GM12878 (cell line): ENCODE measurements at regions of chr2 and their contacts with region 1.

Region 1: DNA sequence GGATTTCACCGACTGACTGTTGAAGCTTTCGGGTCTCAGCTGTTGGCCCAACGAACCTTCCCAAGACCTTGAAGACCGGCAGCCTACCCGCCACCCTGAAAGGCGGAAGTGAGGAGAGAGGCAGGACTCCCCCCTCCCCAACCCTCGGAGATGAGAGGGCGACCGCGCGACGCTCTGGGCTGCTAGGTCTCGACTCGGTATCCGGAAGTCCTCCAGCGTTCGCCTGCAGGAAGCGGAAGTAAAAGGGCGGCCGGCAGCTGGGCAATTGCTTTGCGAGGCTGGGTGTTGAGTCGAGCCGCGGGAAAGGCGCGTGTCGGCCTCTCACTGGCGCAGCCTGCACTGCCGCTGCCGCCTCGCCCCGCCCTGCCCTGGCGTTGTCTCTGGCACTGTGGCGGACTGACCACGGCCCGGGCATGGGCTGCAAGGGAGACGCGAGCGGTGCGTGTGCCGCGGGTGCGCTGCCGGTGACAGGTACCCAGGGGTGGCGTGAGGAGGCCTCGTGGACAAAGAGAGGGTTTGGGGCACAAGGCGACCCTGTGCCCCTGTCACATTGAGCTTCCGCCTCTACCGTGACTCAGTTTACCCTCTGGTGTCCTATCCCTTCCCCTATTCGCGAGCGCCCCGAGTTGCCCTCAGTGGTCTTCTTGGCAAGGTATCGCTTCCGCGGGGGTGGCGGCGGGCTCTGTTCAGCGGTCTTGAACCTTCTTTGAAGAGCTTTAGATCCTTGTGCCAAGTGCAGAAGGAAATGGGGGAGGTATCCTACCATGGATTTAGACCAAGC is at the start of gene UGGT1:
- DNase-seq: peak; percentile 93
- ATAC-seq: peak; percentile 97
- H3K4me3 ChIP-seq: peak within 1 kb of the TSS; percentile 89
- H3K27ac ChIP-seq: peak within 1 kb of the TSS; percentile 89
- H3K4me1 ChIP-seq: peaks cover 11% of the 10 kb centered on the region
- H3K27me3 ChIP-seq: no peaks in the 10 kb centered on the region
- CTCF ChIP-seq: no peak
- EP300 ChIP-seq: no peak
- POLR2A ChIP-seq: peak; percentile 99
- RAD21 ChIP-seq: no peak
- polyA plus RNA-seq, gene UGGT1: 4.1 to 5.9 TPM

Region 2: GRCh38 chr2:127996160-127996559 is 95.0 kb before region 1 on chr2:
- CTCF ChIA-PET with region 1: no interaction called
- POLR2A ChIA-PET with region 1: no interaction called
- RAD21 ChIA-PET with region 1: no interaction called
- SMC1A ChIA-PET with region 1: no interaction called
- in situ Hi-C with region 1: no loop called
- intact Hi-C with region 1: no loop called
- DNase-seq: no peak
- ATAC-seq: no peak
- H3K4me3 ChIP-seq: no peak overlapping the region
- H3K27ac ChIP-seq: no peak overlapping the region
- H3K4me1 ChIP-seq: no peaks in the 10 kb centered on the region
- H3K27me3 ChIP-seq: no peaks in the 10 kb centered on the region
- CTCF ChIP-seq: no peak
- EP300 ChIP-seq: no peak
- POLR2A ChIP-seq: no peak
- RAD21 ChIP-seq: no peak

Region 3: DNA sequence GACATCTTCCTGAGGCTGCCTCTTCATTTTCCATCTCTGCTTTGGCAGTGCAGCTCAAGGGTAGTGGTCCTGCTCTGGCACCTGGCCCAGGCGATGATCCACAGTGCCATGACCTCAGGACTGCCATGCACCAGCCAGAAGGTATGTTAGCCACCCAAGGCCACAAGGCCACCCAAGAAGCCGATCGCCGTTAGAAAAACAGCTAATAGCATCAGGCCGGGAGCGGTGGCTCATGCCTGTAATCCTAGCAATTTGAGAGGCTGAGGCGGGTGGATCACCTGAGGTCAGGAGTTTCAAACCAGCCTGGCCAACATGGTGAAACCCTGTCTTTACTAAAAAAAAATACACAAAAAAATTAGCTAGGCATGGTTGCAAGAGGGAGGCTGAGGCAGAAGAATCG is 28.6 kb before region 1 on chr2:
- CTCF ChIA-PET with region 1: interaction called, 12 read pairs
- POLR2A ChIA-PET with region 1: no interaction called
- RAD21 ChIA-PET with region 1: no interaction called
- SMC1A ChIA-PET with region 1: interaction called, 6 read pairs
- in situ Hi-C with region 1: no loop called
- intact Hi-C with region 1: no loop called
- DNase-seq: no peak
- ATAC-seq: no peak
- H3K4me3 ChIP-seq: no peak overlapping the region
- H3K27ac ChIP-seq: no peak overlapping the region
- H3K4me1 ChIP-seq: no peaks in the 10 kb centered on the region
- H3K27me3 ChIP-seq: no peaks in the 10 kb centered on the region
- CTCF ChIP-seq: no peak
- EP300 ChIP-seq: no peak
- POLR2A ChIP-seq: no peak
- RAD21 ChIP-seq: no peak

Region 4: DNA sequence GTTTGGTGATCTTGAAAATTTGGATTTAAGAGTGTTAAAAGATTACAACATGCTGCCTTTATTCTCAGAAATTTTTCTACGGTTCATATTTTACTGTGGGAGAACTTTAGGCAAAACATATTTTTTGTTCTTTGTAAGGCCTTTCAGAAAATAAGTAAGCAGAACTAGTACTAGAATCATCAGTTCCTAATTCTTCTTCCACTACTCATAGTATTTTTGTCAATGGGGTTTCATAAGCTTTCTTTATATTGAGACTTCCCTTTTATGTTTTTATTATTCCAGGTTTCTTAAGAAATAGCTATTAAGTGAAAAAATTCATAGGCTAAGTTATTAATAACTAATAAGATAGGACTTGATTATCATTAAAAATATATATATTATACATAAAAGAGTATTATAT is 12.3 kb after region 1 on chr2:
- CTCF ChIA-PET with region 1: interaction called, 26 read pairs
- POLR2A ChIA-PET with region 1: interaction called, 25 read pairs
- RAD21 ChIA-PET with region 1: interaction called, 21 read pairs
- SMC1A ChIA-PET with region 1: interaction called, 19 read pairs
- in situ Hi-C with region 1: no loop called
- intact Hi-C with region 1: no loop called
- DNase-seq: no peak
- ATAC-seq: peak; percentile 65
- H3K4me3 ChIP-seq: peak overlapping the region; percentile 33; the same call in 1 of the 2 replicates
- H3K27ac ChIP-seq: peak overlapping the region; percentile 35
- H3K4me1 ChIP-seq: peaks cover 11% of the 10 kb centered on the region
- H3K27me3 ChIP-seq: no peaks in the 10 kb centered on the region
- CTCF ChIP-seq: no peak
- EP300 ChIP-seq: no peak
- POLR2A ChIP-seq: no peak
- RAD21 ChIP-seq: no peak